ENCODE measurements at regions of chr20 and their contacts with region 1.

Region 1: DNA sequence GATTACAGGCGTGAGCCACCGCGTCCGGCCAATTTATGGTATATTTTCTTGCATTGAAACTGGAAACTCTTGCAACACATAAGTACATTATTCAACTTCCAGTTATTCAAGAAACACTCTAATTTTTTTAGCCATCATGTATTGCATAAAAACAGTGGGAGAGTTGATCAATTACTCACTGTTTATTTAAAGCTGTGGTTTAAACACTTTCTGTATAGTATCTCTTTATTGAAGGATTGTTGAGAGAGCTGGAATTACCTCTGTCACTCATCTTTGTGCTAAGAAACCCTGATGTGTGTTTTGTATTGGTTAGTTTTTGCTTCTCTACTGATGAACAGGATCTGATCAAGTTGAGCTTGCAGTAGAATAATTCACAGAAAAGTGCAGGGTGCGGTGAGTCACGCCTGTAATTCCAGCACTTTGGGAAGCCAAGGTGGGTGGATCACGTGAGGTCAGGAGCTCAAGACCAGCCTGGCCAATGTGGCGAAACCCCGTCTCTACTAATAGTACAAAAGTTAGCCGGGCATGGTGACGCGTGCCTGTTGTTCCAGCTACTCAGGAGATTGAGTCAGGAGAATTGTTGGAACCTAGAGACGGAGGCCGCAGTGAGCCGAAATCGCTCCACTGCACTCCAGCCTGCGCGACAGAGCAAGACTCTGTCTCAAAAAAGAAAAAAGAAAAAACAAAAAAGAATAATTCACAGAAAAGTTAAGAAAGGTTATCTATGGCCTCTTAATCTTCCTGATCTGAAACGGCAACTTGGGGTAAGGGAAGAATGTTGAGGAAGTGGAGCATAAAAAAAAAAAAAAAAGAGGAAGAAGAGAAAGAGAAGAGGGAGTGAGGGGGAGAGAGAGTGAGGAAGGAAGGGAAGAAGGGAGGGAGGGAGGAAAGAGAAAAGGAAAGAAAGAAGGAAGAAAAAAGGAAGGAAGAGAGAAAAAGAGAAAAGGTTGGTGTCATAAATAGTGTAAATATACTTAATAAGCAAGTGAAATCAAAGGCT is 69.2 kb upstream of the NCOA3 start:
- DNase-seq: no peak
- H3K4me3 ChIP-seq: peak overlapping the region; percentile 22
- H3K27ac ChIP-seq: peak overlapping the region; percentile 76
- H3K4me1 ChIP-seq: peaks cover 64% of the 10 kb centered on the region
- CTCF ChIP-seq: no peak

Region 2: GRCh38 chr20:46772901-46773300 is 659.6 kb before region 1 on chr20:
- CTCF ChIA-PET with region 1: no interaction called
- POLR2A ChIA-PET with region 1: no interaction called
- intact Hi-C with region 1: no loop called
- DNase-seq: no peak
- H3K4me3 ChIP-seq: no peak overlapping the region
- H3K27ac ChIP-seq: peak overlapping the region; percentile 74
- H3K4me1 ChIP-seq: peaks cover 44% of the 10 kb centered on the region
- CTCF ChIP-seq: no peak

Region 3: GRCh38 chr20:47418061-47418912 is 14.2 kb before region 1 on chr20:
- CTCF ChIA-PET with region 1: interaction called, 3 read pairs
- POLR2A ChIA-PET with region 1: interaction called, 143 read pairs
- intact Hi-C with region 1: loop called (anchors 2 kb)
- DNase-seq: no peak
- H3K4me3 ChIP-seq: no peak overlapping the region
- H3K27ac ChIP-seq: peak overlapping the region; percentile 99
- H3K4me1 ChIP-seq: peaks cover 80% of the 10 kb centered on the region
- CTCF ChIP-seq: no peak

Region 4: GRCh38 chr20:47445291-47445690 is 12.8 kb after region 1 on chr20:
- CTCF ChIA-PET with region 1: no interaction called
- POLR2A ChIA-PET with region 1: interaction called, 13 read pairs
- intact Hi-C with region 1: no loop called
- DNase-seq: no peak
- H3K4me3 ChIP-seq: no peak overlapping the region
- H3K27ac ChIP-seq: no peak overlapping the region
- H3K4me1 ChIP-seq: peaks cover 15% of the 10 kb centered on the region
- CTCF ChIP-seq: no peak

Region 5: GRCh38 chr20:47487175-47487917 is 54.8 kb after region 1 on chr20:
- CTCF ChIA-PET with region 1: no interaction called
- POLR2A ChIA-PET with region 1: interaction called, 5 read pairs
- intact Hi-C with region 1: loop called (anchors 5 kb)
- DNase-seq: peak; percentile 96
- H3K4me3 ChIP-seq: peak overlapping the region; percentile 55
- H3K27ac ChIP-seq: peak overlapping the region; percentile 98
- H3K4me1 ChIP-seq: peaks cover 97% of the 10 kb centered on the region
- CTCF ChIP-seq: no peak